ENCODE measurements at regions of chr1 and their contacts with region 1.

Region 1: GRCh38 chr1:12488666-12489354 is 129.2 kb downstream of the DHRS3 start:
- DNase-seq: no peak
- ATAC-seq: no peak
- H3K4me3 ChIP-seq: no peak overlapping the region
- H3K27ac ChIP-seq: 0 out of 6 replicates have a peak overlapping the region, but pooled peaks of 1 of the 2 experiments have one; percentile 34
- H3K4me1 ChIP-seq: peaks cover 35% of the 10 kb centered on the region
- CTCF ChIP-seq: no peak
- EP300 ChIP-seq: no peak
- POLR2A ChIP-seq: no peak
- RAD21 ChIP-seq: no peak

Region 2: GRCh38 chr1:11893907-11894251 is 594.9 kb before region 1 on chr1:
- CTCF ChIA-PET with region 1: no interaction called
- POLR2A ChIA-PET with region 1: no interaction called
- DNase-seq: peak; percentile 42 to 80
- ATAC-seq: peak; percentile 90 to 94
- H3K4me3 ChIP-seq: no peak overlapping the region
- H3K27ac ChIP-seq: no peak overlapping the region
- H3K4me1 ChIP-seq: no peaks in the 10 kb centered on the region
- CTCF ChIP-seq: peak; percentile 57
- EP300 ChIP-seq: no peak
- POLR2A ChIP-seq: no peak
- RAD21 ChIP-seq: peak; percentile 61 to 80

Region 3: GRCh38 chr1:12636098-12636950 is 147.5 kb after region 1 on chr1:
- CTCF ChIA-PET with region 1: no interaction called
- POLR2A ChIA-PET with region 1: interaction called, 10 read pairs
- DNase-seq: no peak
- ATAC-seq: peak; percentile 59 to 90
- H3K4me3 ChIP-seq: no peak overlapping the region
- H3K27ac ChIP-seq: peak overlapping the region in 1 of 2 experiments; percentile 39; a peak in 3 of 6 replicates
- H3K4me1 ChIP-seq: peaks cover 5% of the 10 kb centered on the region; the same call in 1 of the 3 replicates
- CTCF ChIP-seq: no peak
- EP300 ChIP-seq: no peak
- POLR2A ChIP-seq: no peak
- RAD21 ChIP-seq: no peak